ENCODE measurements at regions of chr20 and their contacts with region 1.

Region 1: DNA sequence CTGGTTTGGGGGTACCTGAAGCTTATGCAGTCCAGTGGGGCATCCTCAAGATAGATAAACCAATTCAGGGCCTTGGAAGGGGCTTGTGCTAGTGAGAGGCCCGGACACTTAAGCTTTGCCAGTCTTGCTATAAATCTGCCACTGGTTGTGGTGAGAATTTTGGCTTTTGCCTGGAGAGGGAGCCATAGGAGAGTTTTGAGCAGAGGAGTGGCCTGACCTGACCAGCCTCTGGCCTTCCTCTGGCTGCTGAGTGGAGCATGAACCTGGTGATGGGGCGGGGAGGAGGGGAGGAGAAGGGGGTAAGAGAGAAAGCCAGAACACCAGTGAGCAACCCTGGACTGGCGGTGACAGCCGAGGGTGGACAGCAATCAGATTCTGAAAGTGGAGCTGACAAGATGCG is 7.1 kb downstream of the TMEM74B start:
- DNase-seq: no peak
- ATAC-seq: peak; percentile 60; the same call in 1 of the 2 replicates
- H3K4me3 ChIP-seq: no peak overlapping the region
- H3K27ac ChIP-seq: no peak overlapping the region
- H3K4me1 ChIP-seq: no peaks in the 10 kb centered on the region
- H3K27me3 ChIP-seq: no peaks in the 10 kb centered on the region
- CTCF ChIP-seq: peak; percentile 48; the same call in 1 of the 2 replicates

Region 2: DNA sequence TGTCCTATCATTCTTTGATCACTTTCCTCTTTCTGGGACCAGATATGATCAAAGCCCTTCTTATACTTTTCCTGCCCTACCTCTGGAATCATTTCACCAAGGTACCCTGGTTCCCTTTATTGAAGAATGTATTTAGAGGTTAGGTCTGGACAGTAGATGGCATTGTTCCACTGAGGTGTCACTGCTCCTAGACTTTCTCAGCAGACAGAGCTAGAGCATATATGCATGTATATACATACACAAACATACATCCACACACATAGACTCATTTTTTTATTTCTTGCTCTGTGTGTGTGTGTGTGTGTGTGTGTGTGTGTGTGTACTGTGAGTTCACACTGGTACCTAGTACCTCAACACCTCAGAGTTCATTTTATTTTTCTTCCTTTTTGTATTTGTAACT is 1736.5 kb after region 1 on chr20:
- CTCF ChIA-PET with region 1: no interaction called
- POLR2A ChIA-PET with region 1: interaction called, 10 read pairs
- in situ Hi-C with region 1: no loop called
- intact Hi-C with region 1: no loop called
- DNase-seq: no peak
- ATAC-seq: peak; percentile 70; the same call in 1 of the 2 replicates
- H3K4me3 ChIP-seq: no peak overlapping the region
- H3K27ac ChIP-seq: no peak overlapping the region
- H3K4me1 ChIP-seq: no peaks in the 10 kb centered on the region
- H3K27me3 ChIP-seq: no peaks in the 10 kb centered on the region
- CTCF ChIP-seq: peak; percentile 46; the same call in 1 of the 2 replicates